ENCODE measurements at regions of chr6 and their contacts with region 1.

Region 1: GRCh38 chr6:70706491-70707123 is 38.9 kb downstream of the SMAP1 start:
- DNase-seq: peak; percentile 26
- ATAC-seq: no peak
- H3K4me3 ChIP-seq: no peak overlapping the region
- H3K27ac ChIP-seq: no peak overlapping the region
- H3K4me1 ChIP-seq: no peaks in the 10 kb centered on the region
- H3K27me3 ChIP-seq: no peaks in the 10 kb centered on the region
- CTCF ChIP-seq: peak; percentile 27 to 78 (median 71); a peak in 5 of 6 replicates
- POLR2A ChIP-seq: no peak
- RAD21 ChIP-seq: peak; percentile 65

Region 2: GRCh38 chr6:70884074-70884983 is 177.7 kb after region 1 on chr6:
- CTCF ChIA-PET with region 1: interaction called, 19 read pairs
- POLR2A ChIA-PET with region 1: no interaction called
- RAD21 ChIA-PET with region 1: interaction called in 1 of 2 experiments, 3 read pairs
- intact Hi-C with region 1: loop called (anchors 1 kb)
- DNase-seq: peak; percentile 32
- ATAC-seq: peak; percentile 98
- H3K4me3 ChIP-seq: no peak overlapping the region
- H3K27ac ChIP-seq: no peak overlapping the region
- H3K4me1 ChIP-seq: no peaks in the 10 kb centered on the region
- H3K27me3 ChIP-seq: no peaks in the 10 kb centered on the region
- CTCF ChIP-seq: peak; percentile 80 to 90 (median 90)
- POLR2A ChIP-seq: no peak
- RAD21 ChIP-seq: peak; percentile 86

Region 3: DNA sequence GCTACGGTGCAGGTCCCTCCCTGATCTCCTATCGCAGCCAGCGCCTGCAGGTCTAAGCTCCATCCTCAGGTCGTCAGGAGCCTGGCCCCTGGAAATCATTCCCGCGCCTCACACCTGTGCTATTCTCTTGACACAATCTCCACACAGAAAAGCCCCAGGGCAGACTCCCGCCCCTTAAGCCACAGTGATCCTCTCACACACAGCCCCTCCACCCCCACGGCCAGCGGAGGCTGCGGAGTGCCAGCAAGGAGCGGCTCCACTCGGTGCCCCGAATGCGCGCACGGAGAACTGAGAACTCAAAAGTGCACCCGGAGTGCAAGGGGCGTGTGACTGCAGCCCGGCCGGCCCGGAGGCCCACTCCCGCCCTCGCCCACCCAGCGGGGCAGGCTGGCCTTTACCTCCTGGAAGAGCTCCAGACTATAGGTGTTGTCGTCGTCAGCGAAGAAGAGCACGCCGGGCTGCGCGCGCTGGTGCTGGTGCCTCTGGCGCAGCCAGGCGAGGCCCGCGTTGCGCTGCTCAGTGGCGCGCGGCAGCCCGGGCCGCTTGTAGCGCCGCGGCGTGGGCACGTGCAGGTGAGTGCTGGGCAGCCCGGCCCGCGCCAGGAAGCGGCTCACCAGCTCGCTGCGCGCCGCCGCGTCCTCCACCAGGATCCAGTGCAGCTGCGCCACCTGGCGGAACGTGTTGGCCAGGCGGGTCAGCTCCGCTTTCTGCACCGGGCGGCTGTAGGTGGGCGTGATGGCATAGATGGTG is 249.0 kb after region 1 on chr6:
- CTCF ChIA-PET with region 1: interaction called, 10 read pairs
- POLR2A ChIA-PET with region 1: no interaction called
- RAD21 ChIA-PET with region 1: interaction called in 1 of 2 experiments, 4 read pairs
- intact Hi-C with region 1: loop called (anchors 1 kb)
- DNase-seq: peak; percentile 60
- ATAC-seq: peak; percentile 100
- H3K4me3 ChIP-seq: no peak overlapping the region
- H3K27ac ChIP-seq: no peak overlapping the region
- H3K4me1 ChIP-seq: peaks cover 3 to 5% of the 10 kb centered on the region in 2 experiments; a peak in 2 of 4 replicates
- H3K27me3 ChIP-seq: peaks cover 21% of the 10 kb centered on the region; the same call in 1 of the 2 replicates
- CTCF ChIP-seq: peak; percentile 63 to 85 (median 78)
- POLR2A ChIP-seq: no peak
- RAD21 ChIP-seq: peak; percentile 77

Region 4: DNA sequence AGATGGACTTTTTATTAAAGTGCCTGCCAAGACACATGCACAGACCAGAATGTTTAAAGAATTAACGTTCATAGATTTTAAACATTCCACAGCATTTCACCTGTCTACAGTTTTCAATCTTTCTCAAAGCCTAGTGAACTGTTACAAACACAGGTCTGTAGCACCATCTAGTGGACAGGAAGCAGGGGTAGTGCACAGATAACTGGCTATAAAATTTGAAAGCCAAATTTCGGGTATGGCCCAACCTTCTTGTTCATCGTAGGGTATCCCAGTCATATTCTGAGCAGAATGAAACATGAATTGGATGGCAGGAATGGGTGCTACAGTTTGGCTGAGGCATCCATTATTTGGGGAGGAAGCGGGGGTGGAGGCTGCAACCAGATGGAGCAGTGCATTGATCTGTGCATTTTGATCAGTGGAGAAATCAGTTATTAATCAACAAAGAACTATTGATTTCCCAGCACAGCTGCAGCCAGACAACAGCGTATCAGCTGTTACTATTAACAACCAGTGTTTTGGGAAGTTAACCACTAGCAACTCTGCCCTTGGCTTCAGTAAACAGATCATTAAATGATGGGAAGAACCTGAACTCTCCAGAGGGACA is 306.4 kb after region 1 on chr6:
- CTCF ChIA-PET with region 1: interaction called, 4 read pairs
- POLR2A ChIA-PET with region 1: no interaction called
- RAD21 ChIA-PET with region 1: no interaction called
- intact Hi-C with region 1: loop called (anchors 1 kb)
- DNase-seq: peak; percentile 42
- ATAC-seq: peak; percentile 94
- H3K4me3 ChIP-seq: no peak overlapping the region
- H3K27ac ChIP-seq: no peak overlapping the region
- H3K4me1 ChIP-seq: no peaks in the 10 kb centered on the region
- H3K27me3 ChIP-seq: no peaks in the 10 kb centered on the region; the same call in 1 of the 2 replicates
- CTCF ChIP-seq: peak; percentile 51 to 90 (median 85); a peak in 5 of 6 replicates
- POLR2A ChIP-seq: no peak
- RAD21 ChIP-seq: peak; percentile 68

Region 5: DNA sequence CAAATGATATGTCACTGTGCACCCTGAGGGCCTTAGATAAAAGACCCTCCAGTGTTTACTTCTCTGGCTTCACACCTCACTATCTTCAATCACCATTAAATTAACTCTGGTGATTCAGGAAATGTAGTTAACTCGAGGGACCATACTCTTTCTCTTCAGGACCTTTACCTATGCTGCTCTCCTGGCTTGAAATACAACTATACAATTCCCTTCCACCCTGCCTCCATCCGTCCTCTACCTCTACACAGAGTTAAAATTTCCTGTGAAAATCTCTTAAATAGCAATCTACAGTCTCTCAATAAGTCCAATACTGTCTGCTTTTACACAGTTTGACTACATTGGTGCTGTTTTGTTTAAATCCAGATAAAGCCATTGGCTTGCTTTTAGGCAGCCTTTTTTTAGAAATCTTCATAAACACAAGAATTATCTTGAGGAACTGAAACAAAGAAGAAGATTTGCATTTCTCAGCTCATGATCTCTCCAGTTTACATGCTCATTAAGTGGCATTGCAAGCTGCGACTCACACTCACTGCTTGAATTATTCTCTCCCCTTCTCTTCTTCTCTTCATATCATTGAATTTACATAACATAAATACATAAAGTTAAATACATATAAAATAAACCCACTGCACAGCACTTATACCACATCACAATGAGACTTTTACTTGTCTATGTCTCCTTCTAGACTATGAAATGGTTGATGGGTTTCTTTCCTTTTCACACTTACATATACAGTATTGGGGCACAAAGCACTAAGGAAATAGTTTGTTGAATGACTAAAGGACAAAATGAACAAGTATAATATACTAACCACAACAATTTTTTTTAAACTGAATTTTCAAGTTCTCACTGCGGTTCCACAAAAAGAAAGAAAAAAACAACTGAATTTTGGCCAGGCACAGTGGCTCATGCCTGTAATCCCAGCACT is 1676.3 kb after region 1 on chr6:
- CTCF ChIA-PET with region 1: no interaction called
- POLR2A ChIA-PET with region 1: no interaction called
- RAD21 ChIA-PET with region 1: no interaction called
- intact Hi-C with region 1: no loop called
- DNase-seq: no peak
- ATAC-seq: no peak
- H3K4me3 ChIP-seq: no peak overlapping the region
- H3K27ac ChIP-seq: no peak overlapping the region
- H3K4me1 ChIP-seq: no peaks in the 10 kb centered on the region
- H3K27me3 ChIP-seq: no peaks in the 10 kb centered on the region; the same call in 1 of the 2 replicates
- CTCF ChIP-seq: no peak
- POLR2A ChIP-seq: no peak
- RAD21 ChIP-seq: no peak